ENCODE measurements at regions of chr2 and their contacts with region 1.

Region 1: GRCh38 chr2:112259509-112260294 is 4.9 kb upstream of the ZC3H8 start:
- DNase-seq: no peak
- H3K4me3 ChIP-seq: no peak overlapping the region
- CTCF ChIP-seq: peak; percentile 93

Region 2: GRCh38 chr2:112275306-112275886 is 15.7 kb after region 1 on chr2 and contains the start of gene ZC3H6:
- CTCF ChIA-PET with region 1: interaction called, 35 read pairs
- POLR2A ChIA-PET with region 1: no interaction called
- DNase-seq: peak; percentile 94
- H3K4me3 ChIP-seq: peak within 1 kb of the TSS; percentile 93
- CTCF ChIP-seq: no peak

Region 3: GRCh38 chr2:112314856-112315255 is 55.2 kb after region 1 on chr2:
- CTCF ChIA-PET with region 1: no interaction called
- POLR2A ChIA-PET with region 1: no interaction called
- DNase-seq: no peak
- H3K4me3 ChIP-seq: no peak overlapping the region
- CTCF ChIP-seq: no peak

Region 4: GRCh38 chr2:112433932-112434730 is 174.4 kb after region 1 on chr2:
- CTCF ChIA-PET with region 1: interaction called, 20 read pairs
- POLR2A ChIA-PET with region 1: no interaction called
- DNase-seq: no peak
- H3K4me3 ChIP-seq: no peak overlapping the region
- CTCF ChIP-seq: no peak